Left ventricle myocardium superior (tissue), 1 donor: ENCODE measurements at regions of chr11 and their contacts with region 1.

Region 1: DNA sequence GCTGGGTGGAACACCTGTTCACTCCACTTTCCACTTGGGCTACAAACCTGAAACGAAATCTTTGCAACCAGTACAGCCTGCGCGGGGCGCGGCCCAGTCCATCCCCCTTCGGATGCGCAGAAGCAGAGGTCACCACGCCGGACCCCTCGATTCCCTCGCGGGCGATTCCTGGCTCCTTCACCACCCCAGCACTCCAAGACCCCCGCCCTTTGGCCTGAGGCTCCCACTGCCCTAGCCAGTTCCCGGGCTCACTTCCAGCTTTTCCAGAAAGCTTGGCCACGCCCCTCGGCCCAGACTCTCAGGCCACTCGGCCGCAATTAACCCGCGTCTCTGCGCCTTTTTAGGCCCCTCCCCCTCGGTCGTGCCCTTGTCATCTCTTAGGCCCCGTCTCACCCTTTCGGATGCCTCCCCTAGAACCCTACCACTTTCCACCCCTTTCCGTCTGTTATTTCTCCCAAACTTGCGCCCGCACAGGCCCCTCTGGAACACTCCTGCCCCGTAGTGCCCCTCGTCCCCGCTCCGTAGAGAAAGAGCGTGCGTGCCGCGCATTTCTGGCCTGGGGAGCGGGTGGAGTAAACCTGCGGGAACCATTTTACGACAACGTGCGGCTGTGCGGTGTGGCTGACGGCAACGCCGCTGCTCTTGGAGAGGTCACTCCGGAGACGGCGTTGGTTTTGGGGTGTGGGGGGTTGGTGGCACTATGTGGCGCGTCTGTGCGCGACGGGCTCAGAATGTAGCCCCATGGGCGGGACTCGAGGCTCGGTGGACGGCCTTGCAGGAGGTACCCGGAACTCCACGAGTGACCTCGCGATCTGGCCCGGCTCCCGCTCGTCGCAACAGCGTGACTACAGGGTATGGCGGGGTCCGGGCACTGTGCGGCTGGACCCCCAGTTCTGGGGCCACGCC is at the start of gene DLAT:
- DNase-seq: peak; percentile 93
- ATAC-seq: peak; percentile 93
- total RNA-seq, gene DLAT: 189 TPM

Region 2: DNA sequence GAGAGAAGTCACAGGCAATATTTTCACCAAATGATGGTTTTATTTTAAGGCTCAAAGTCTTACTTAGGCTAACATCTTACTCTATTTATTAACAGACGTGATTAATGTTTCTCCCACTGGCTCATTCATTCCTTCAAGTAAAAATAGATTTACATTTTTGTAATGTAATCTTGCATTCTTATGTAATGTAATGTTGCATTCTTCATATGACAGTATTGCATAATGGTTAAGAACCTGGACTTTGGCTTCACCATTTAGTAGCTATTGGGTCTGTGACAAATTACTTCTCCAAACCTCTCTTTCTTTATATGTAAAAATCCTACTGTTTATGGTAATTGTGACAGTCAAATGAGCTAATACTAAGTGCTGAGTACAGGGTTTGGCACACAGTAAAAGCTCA is 91.2 kb before region 1 on chr11:
- intact Hi-C with region 1: loop called (anchors 5 kb)
- DNase-seq: no peak
- ATAC-seq: no peak